GM12878 (cell line): ENCODE measurements at regions of chr12 and their contacts with region 1.

Region 1: DNA sequence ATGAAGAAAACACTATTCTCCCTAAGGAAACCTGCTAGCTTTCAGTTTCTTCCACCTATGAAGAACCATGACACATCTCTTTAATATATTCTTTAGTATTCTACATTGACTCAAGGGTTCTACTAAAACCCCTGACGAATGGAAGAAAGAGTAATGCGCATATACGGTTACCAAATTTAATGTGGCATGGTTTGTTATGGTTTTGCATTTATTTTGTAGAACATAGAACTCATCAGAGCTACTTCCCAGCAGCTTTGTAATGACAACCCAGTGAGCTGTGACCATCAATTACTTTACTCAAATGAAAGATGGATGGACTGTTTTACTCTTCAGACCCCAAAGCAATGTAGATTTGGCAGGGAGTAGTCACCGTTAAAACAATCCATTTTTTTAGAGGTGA is 19.2 kb downstream of the PTHLH start:
- DNase-seq: no peak
- ATAC-seq: no peak
- H3K4me3 ChIP-seq: no peak overlapping the region
- H3K27ac ChIP-seq: no peak overlapping the region
- H3K4me1 ChIP-seq: no peaks in the 10 kb centered on the region
- H3K27me3 ChIP-seq: peaks cover 0 to 2% of the 10 kb centered on the region in 2 experiments; a peak in 2 of 4 replicates
- CTCF ChIP-seq: no peak
- EP300 ChIP-seq: no peak
- POLR2A ChIP-seq: no peak
- RAD21 ChIP-seq: no peak

Region 2: DNA sequence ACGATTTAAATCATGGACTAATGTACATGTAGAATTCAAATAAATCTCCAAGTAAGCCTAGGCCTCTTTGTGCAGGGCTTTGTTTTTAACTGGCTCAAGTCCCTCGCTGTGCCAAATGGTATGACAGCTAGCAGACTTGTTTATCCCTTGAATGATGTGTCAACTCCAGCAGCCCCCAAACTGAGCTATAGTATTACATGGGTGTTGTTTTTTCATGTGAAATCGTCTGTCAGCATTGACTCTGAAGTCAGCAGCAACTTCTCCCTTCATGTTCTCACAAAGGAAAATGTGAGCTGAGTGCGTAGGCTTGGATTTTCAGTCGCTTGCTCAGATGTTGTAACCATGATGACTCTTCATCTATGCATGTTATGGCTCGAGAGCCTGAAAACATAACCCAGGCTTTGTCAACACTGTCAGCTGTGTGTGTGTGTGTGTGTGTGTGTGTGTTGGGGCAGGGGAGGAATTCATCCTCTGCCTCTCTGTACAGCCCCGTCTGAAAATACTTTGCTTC is 54.1 kb before region 1 on chr12:
- CTCF ChIA-PET with region 1: no interaction called
- POLR2A ChIA-PET with region 1: no interaction called
- RAD21 ChIA-PET with region 1: no interaction called
- SMC1A ChIA-PET with region 1: no interaction called
- in situ Hi-C with region 1: no loop called
- intact Hi-C with region 1: no loop called
- DNase-seq: no peak
- ATAC-seq: no peak
- H3K4me3 ChIP-seq: no peak overlapping the region
- H3K27ac ChIP-seq: no peak overlapping the region
- H3K4me1 ChIP-seq: peaks cover 8% of the 10 kb centered on the region
- H3K27me3 ChIP-seq: no peaks in the 10 kb centered on the region
- CTCF ChIP-seq: no peak
- EP300 ChIP-seq: no peak
- POLR2A ChIP-seq: no peak
- RAD21 ChIP-seq: no peak

Region 3: DNA sequence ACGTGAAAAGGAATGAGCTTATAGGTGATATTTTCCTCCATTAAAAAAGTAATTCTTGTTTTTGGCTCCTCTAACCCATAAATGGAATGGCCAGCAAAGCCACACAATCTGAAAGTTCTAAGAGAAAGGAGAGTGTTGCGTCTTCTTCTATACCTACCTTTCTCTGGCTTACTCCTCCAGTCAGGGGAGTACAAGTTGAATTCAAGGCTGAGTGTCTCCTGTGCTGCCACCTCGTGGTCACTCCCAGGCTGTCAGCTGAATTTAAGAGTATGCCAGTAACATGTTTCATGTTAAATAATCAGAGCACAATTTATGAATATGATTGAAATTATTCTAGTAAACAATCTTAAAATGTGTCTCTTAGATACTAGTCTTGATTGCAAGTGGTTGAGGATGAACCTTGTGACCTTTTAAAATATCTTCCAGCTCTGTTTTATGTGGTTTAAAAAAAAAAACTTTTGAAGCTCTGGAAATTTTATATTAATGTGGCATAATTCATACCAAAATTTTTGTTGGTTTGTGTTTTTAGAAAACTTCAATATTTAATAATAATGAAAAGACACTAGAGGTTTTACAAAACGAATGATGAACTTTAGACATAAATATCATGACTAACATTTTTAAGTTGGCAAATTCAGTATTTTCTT is 12.5 kb before region 1 on chr12:
- CTCF ChIA-PET with region 1: interaction called, 15 read pairs
- POLR2A ChIA-PET with region 1: no interaction called
- RAD21 ChIA-PET with region 1: no interaction called
- SMC1A ChIA-PET with region 1: interaction called, 3 read pairs
- in situ Hi-C with region 1: no loop called
- intact Hi-C with region 1: no loop called
- DNase-seq: peak; percentile 60
- ATAC-seq: peak; percentile 98
- H3K4me3 ChIP-seq: no peak overlapping the region
- H3K27ac ChIP-seq: no peak overlapping the region
- H3K4me1 ChIP-seq: no peaks in the 10 kb centered on the region
- H3K27me3 ChIP-seq: no peaks in the 10 kb centered on the region
- CTCF ChIP-seq: peak; percentile 82 to 91 (median 87)
- EP300 ChIP-seq: no peak
- POLR2A ChIP-seq: no peak
- RAD21 ChIP-seq: peak; percentile 88